ENCODE measurements at regions of chr12 and their contacts with region 1.

Region 1: DNA sequence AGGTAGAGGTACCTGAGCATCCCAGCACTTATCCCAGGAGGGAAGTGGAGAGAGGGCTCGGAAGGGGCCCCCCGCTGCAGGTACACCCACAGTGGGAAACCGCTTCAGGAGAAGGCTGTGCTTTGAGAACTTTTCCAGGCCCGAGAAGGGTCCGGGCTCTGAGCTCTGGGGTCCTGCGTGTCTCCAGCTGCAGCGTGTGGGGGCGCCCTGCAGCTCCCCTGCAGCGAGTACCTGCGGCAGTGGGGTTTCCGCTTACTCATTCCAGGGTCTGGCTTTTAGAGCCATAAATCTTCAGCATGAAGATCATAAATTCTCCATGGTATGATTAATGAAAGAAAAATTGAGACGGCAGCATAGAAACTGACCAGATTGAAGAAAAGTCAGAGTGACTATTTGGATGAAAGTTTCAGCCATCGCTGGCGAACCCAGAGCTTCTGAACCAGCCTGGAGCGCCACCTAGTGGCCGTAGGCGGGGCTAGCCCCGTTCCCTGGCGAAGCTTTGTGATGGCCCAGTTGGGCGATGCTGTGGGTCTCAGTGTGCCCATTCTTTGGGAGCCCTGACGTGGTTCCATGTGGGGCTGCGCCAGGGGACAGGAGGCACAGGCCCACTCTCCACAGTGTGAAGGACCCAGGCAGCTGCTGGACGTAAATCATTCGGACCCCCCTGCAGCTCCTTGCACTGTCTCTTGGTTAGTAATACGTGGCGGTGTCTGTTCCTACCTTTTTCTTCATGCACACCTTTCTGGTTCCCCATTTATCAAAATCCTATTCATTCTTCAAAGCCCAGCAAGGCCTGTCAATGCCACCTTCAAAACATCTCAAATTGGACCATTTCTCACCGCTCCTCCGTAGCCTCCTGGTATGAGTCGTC is 198.2 kb downstream of the TSPAN9 start:
- DNase-seq: peak in 2 of 3 donors; percentile 81 to 84
- ATAC-seq: peak; percentile 80
- H3K4me3 ChIP-seq: no peak overlapping the region
- H3K4me1 ChIP-seq: no peaks in the 10 kb centered on the region
- CTCF ChIP-seq: peak; percentile 94

Region 2: DNA sequence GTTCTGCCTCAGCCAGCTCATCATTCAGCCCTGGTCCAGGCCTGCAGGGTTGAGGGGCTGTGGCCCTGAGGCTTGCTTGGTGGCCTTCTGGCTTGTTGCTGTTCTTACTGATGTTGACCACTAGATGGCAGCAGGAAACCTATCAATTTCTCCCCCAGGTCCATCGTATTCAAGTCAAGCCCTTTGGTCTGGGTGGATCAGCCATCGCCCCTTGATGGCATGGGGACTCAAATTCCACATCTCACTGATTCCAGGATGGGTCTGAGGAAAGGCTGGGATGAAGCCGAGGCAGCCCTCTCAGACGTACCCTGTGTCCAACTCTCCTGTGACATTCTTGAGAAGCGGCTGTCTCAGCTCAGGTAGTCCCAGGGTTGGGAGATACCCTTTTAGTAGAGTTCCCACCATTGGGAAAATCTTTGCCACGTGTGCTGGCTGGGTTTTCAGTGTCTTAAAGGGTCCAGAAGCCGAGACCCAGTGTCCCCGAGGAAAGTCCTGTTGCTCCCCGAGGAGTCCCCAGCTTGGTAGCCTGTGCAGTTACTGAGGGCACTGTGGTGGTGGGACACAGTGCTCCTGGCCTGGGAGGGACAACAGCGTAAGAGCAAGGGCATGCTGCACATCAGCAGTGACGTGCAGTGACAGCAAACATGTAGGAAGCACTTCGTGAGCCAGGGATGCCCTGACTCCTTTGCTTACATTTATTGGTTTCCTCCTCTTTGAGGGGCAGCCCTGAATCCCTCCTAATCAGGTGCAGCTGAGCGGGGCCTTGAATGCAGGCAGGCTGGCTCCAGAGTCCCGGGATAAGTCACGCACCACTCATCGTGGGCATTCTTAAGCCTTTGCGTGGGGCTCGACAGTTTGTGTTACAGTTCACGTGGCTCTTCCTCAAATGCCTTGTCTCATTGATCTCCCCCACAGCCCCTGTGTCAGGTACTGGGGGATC is 139.6 kb before region 1 on chr12:
- intact Hi-C with region 1: loop called (anchors 2 to 5 kb)
- DNase-seq: peak in 1 of 3 donors; percentile 44
- ATAC-seq: peak; percentile 77
- H3K4me3 ChIP-seq: no peak overlapping the region
- H3K4me1 ChIP-seq: no peaks in the 10 kb centered on the region
- CTCF ChIP-seq: peak; percentile 53

Measured in mucosa of descending colon (tissue), 3 donors.